ENCODE measurements at regions of chr4 and their contacts with region 1.

Region 1: DNA sequence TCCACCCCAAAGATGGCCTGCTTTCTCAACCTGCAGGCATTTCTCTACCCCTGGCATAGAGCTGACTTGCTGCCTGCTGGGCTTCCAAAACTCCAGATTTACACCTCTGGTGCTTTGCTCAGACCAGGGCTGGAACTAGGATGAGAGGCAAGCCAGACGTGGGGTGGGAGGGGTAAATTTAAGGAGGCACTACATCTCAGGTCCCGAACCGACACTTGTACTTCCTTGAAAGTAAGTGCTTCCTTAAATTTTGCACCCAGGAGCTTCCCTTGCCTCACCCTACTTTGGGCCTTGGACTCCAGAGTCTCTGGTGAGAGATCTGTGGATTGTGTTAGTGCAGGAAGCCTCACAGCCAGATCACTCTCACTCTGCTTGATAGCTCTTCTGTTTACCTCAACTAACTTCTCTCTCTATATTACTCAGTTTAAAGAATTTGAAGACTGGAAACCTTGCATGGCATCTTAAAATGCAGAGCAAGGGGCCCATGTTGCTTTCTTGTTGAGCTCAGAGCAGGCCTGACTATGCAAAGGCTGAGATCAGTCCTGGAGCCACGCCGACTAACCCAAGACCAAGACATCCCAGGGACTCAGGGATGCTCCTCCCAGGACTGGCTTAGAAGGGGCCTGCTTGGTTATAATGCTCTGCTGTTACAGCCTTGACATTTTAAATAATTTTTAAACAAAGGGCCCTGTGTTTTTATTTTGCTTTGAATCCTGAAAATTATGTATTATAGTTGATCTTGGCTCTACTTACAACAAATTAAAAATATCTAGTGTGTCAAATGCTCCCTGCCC is 145.0 kb upstream of the LEF1 start:
- DNase-seq: peak; percentile 49
- H3K4me3 Mint-ChIP-seq: no peak overlapping the region
- H3K27ac Mint-ChIP-seq: no peak overlapping the region
- H3K4me1 Mint-ChIP-seq: peaks cover 44% of the 10 kb centered on the region
- H3K27me3 Mint-ChIP-seq: peaks cover 1% of the 10 kb centered on the region

Region 2: DNA sequence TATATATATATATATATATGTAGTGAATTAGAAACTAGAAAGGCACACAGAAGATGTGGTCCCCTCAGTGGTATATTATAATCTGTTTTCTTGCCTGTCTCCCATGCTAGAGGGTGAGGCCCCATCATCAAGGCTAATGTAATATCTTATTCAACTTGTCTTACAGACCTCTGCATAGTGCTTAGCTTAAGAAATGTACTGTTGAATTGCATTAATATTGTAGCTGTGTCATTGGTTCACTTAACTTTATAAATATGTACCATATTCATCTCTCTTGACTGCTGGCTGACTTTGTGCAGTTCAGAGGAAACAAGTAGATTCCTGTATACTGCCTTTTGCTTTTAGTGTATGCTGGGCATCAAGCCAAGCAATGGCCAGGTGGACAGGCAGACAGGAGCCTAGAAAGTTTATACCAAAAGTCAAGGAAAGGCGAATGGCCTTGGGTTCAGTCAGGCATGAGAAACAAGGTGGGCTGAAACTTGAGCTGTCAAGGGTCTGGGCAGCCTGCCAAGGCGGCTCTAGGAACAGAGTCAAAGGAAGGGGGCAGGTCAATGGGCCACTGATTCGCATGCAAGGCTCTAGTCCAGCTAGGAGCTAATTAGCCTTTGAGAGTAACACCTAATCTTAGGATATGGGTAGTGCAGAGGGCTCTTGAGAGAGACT is 66.2 kb before region 1 on chr4:
- CTCF ChIA-PET with region 1: no interaction called
- intact Hi-C with region 1: no loop called
- DNase-seq: no peak
- H3K4me3 Mint-ChIP-seq: no peak overlapping the region
- H3K27ac Mint-ChIP-seq: no peak overlapping the region
- H3K4me1 Mint-ChIP-seq: peaks cover 13% of the 10 kb centered on the region
- H3K27me3 Mint-ChIP-seq: no peaks in the 10 kb centered on the region

Region 3: DNA sequence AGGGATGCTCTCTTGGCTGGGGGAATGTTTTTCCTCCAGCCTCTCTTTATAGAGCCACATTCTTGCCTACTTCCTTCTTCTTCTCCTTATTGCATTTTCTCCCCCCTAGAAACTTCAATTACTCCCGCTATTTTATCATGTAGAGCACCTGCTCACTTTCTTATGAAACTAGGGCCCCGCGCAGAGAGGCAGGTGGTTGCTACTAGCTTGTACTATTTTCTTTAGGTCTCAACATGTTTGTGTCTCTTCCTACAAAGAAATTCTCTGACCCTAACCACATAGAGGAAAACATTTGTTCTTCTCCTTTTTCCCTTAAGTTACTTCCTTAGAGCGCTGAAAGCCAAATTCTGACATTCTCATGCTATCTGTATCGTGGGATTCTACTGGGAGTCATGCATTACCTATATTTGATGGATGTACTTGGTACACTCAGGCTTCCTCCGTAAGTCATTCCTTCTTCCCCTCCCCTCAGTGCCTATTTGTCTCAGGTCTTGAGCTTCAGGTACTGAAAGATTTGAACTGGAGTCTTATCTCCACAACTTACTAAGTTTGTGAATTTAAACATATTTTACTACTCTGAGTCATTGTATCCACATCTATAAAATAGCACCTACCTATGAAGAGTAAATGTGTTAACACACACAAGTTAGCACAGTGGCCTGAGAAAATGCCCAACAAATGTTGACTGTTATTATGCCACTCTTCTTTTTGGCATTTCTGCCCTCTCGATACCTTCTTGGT is 14.1 kb after region 1 on chr4:
- CTCF ChIA-PET with region 1: no interaction called
- intact Hi-C with region 1: loop called (anchors 1 kb)
- DNase-seq: no peak
- H3K4me3 Mint-ChIP-seq: no peak overlapping the region
- H3K27ac Mint-ChIP-seq: no peak overlapping the region
- H3K4me1 Mint-ChIP-seq: peaks cover 22% of the 10 kb centered on the region
- H3K27me3 Mint-ChIP-seq: no peaks in the 10 kb centered on the region

Region 4: GRCh38 chr4:108512615-108513505 is 199.1 kb after region 1 on chr4:
- CTCF ChIA-PET with region 1: no interaction called
- intact Hi-C with region 1: no loop called
- DNase-seq: peak; percentile 72
- H3K4me3 Mint-ChIP-seq: peak overlapping the region; percentile 75
- H3K27ac Mint-ChIP-seq: peak overlapping the region; percentile 72
- H3K4me1 Mint-ChIP-seq: peaks cover 17% of the 10 kb centered on the region
- H3K27me3 Mint-ChIP-seq: no peaks in the 10 kb centered on the region

Measured in activated naive CD4-positive, alpha-beta T cell treated with anti-CD3 and anti-CD28 coated beads for 36 hours (primary cell).